WTC11 (cell line): ENCODE measurements at regions of chr15 and their contacts with region 1.

Region 1: DNA sequence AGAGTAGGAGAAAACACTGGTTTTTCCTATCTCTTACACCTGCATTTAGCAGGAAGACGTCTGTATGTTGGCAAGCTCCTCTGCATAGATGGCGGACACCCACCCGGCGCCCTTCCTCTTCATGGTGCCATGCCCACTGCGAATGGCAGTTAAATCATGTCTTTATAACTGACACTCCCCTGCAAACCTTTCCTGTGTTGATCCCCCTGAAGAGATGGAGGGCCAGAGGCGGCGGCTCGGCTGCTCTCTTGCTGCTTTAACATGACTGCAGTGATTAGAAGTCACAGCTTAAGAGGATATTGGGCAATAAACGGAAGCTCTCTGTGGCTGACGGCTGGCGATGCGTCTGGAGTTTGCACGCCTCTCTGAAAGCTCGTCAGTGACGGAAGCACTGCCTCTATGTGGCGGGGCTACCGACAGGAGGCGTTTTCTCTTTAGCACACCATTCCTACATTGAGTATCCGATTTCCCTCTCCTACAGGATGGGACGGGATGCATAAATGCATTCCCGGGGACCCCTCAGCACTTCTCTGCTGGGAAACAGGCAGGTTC is 25.5 kb upstream of the SNRPA1 start:
- DNase-seq: peak; percentile 64
- ATAC-seq: peak; percentile 90
- H3K4me3 Mint-ChIP-seq: peak overlapping the region; percentile 47; the same call in 1 of the 2 replicates
- H3K27ac Mint-ChIP-seq: no peak overlapping the region
- H3K4me1 Mint-ChIP-seq: peaks cover 6% of the 10 kb centered on the region
- H3K27me3 Mint-ChIP-seq: 0 out of 2 replicates have a peak, but pooled peaks cover 2% of the 10 kb centered on the region
- CTCF ChIP-seq: peak; percentile 42; the same call in 1 of the 2 replicates

Region 2: DNA sequence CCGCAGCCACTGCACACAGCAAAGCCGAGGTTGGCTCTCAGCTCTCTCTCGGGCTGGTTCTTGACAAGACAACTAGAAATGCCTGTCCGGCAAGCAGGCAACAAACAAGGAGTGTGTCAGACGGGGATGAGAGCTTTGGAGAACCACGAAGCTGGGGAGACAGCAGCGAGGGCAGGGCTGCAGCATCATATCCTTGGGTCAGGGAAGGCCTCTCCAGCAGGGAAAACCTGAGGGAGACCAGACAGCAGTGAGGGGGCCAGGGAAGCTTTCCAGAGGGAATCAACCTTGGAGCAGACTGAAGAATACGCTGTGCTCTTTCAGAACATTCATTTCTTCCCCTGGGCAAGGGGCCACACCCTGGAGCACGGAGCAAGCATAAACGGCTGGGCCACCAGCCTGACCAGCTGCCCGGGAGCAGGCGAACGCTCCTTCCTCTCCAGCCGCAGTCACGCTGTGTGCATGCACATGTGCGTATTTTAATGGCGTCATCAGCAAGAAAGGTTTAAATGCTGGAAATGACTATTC is 127.4 kb before region 1 on chr15:
- CTCF ChIA-PET with region 1: no interaction called
- POLR2A ChIA-PET with region 1: no interaction called
- DNase-seq: no peak
- ATAC-seq: peak; percentile 18
- H3K4me3 Mint-ChIP-seq: no peak overlapping the region
- H3K27ac Mint-ChIP-seq: peak overlapping the region; percentile 75
- H3K4me1 Mint-ChIP-seq: peaks cover 74% of the 10 kb centered on the region
- H3K27me3 Mint-ChIP-seq: no peaks in the 10 kb centered on the region
- CTCF ChIP-seq: no peak

Region 3: GRCh38 chr15:101232677-101233076 is 87.9 kb before region 1 on chr15:
- CTCF ChIA-PET with region 1: no interaction called
- POLR2A ChIA-PET with region 1: no interaction called
- DNase-seq: no peak
- ATAC-seq: peak; percentile 85
- H3K4me3 Mint-ChIP-seq: no peak overlapping the region
- H3K27ac Mint-ChIP-seq: no peak overlapping the region
- H3K4me1 Mint-ChIP-seq: peaks cover 35% of the 10 kb centered on the region
- H3K27me3 Mint-ChIP-seq: no peaks in the 10 kb centered on the region
- CTCF ChIP-seq: no peak

Region 4: DNA sequence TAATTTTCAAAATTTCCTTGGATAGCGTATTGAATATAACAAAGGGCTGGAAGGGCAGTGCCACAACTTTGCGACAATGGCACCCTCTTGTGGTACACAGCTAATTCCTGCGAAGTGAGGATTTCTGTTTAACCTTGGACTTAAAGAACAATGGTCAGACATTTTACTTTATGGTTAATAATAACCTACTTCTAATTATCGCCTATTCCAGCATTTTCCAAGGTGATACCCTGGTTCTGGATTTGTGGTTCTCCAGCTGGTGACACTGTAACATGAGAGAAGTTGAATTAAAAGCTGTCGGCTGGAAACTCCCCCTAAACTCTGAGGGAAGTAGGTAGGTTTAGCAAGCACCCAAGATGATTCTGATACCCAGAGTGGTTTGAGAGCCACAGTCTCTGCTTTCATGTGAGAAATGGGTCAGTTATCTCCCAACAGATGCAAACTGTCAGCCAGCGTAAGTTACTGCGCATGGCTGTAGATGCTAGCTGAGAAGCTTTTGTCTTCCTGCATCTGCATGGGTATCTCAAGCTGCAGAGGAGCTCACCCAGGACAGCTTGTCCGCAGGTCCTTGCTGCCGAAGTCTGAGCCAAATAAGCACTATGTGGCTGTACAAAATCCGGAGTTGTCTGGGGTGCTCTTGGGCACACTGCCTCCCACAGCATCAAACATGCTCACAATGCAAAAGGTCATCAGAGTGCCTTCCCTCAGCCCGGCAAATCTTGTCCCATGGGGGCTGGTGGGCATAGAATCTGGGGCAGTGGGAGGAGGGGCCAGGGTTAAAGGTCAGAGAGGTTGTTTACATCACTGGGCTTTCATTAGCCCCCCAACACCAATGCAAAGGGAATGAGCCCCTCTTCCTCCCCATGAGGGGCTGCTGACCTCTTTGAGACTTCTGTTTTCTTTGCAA is 62.1 kb before region 1 on chr15:
- CTCF ChIA-PET with region 1: no interaction called
- POLR2A ChIA-PET with region 1: no interaction called
- DNase-seq: peak; percentile 45
- ATAC-seq: peak; percentile 62
- H3K4me3 Mint-ChIP-seq: no peak overlapping the region
- H3K27ac Mint-ChIP-seq: no peak overlapping the region
- H3K4me1 Mint-ChIP-seq: peaks cover 38% of the 10 kb centered on the region
- H3K27me3 Mint-ChIP-seq: no peaks in the 10 kb centered on the region
- CTCF ChIP-seq: peak; percentile 48

Region 5: DNA sequence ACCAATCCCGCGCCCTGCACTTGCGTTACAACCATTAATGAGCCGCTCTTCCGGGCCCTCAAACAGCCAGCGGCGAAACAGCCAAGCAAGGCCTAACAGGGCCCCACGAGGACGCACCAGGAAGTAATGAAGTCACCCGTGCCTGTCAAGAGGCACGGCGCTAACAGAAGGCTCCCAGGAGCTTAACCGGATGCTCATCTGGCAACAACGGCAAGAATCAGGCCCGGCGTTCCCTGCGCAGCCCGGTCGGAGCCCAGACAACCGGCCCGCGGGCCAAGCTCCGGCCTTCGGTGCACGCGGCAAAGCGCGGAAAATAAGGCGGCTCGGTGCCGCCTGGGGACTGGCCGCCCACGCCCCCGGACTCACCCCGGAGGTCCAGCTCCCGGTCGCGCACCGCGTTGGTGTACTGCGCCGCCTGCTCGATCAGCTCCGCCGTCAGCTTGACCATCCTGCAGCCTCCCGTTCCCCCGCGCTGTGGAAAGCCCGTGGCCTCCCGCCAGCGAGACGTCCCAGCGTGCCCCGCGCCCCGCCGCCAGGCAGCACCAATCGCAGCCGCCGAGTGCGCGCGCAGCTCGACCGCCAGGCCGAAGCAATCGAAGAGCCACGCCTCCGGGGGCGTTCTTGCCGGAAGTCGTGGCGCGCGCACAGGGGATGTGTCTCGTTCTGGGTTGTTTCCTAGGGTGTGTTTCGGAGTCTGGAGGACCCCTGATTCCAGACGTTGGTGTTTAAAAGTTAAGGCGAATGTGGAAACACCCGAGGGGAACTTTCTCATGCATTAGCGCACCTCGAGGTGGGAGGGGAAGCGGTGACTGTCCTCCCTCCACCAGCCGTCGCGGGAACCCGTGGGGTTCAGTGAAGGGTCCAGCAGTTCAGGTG is 25.6 kb before region 1 on chr15 and contains the start of gene SNRPA1:
- CTCF ChIA-PET with region 1: interaction called, 11 read pairs
- POLR2A ChIA-PET with region 1: interaction called, 3 read pairs
- DNase-seq: peak; percentile 95
- ATAC-seq: peak; percentile 87
- H3K4me3 Mint-ChIP-seq: peak within 1 kb of the TSS; percentile 96
- H3K27ac Mint-ChIP-seq: peak within 1 kb of the TSS; percentile 74
- H3K4me1 Mint-ChIP-seq: peaks cover 17% of the 10 kb centered on the region
- H3K27me3 Mint-ChIP-seq: no peaks in the 10 kb centered on the region; the same call in 1 of the 2 replicates
- CTCF ChIP-seq: no peak
- total RNA-seq, gene SNRPA1: 144 to 170 TPM (median 151 TPM) in 3 replicates

Region 6: DNA sequence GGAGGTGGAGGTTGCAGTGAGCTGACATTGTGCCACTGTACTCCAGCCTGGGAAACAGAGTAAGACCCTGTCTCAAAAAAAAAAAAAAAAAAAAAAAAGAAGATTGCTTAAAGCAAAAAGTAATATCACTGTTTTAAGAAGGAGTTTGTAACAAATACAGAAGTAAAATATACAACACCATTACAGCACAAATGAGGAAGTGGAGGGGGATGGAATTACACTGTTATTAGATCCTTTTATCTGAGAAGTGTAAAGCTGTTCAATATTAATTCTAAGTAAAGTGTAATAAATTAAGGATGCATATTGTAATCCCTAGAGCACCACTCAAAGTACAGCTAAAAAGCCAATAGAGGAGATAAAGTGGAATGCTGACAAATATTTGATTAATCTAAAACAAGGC is 21.5 kb after region 1 on chr15:
- CTCF ChIA-PET with region 1: no interaction called
- POLR2A ChIA-PET with region 1: no interaction called
- DNase-seq: no peak
- ATAC-seq: no peak
- H3K4me3 Mint-ChIP-seq: no peak overlapping the region
- H3K27ac Mint-ChIP-seq: no peak overlapping the region
- H3K4me1 Mint-ChIP-seq: no peaks in the 10 kb centered on the region
- H3K27me3 Mint-ChIP-seq: peaks cover 13% of the 10 kb centered on the region
- CTCF ChIP-seq: no peak

Region 7: GRCh38 chr15:101396484-101397261 is 76.1 kb after region 1 on chr15:
- CTCF ChIA-PET with region 1: interaction called, 10 read pairs
- POLR2A ChIA-PET with region 1: no interaction called
- DNase-seq: no peak
- ATAC-seq: peak; percentile 34; the same call in 1 of the 2 replicates
- H3K4me3 Mint-ChIP-seq: no peak overlapping the region
- H3K27ac Mint-ChIP-seq: no peak overlapping the region
- H3K4me1 Mint-ChIP-seq: peaks cover 15% of the 10 kb centered on the region
- H3K27me3 Mint-ChIP-seq: no peaks in the 10 kb centered on the region; the same call in 1 of the 2 replicates
- CTCF ChIP-seq: no peak

Region 8: GRCh38 chr15:101641166-101641764 is 320.7 kb after region 1 on chr15:
- CTCF ChIA-PET with region 1: interaction called, 14 read pairs
- POLR2A ChIA-PET with region 1: no interaction called
- DNase-seq: peak; percentile 76
- ATAC-seq: peak; percentile 42
- H3K4me3 Mint-ChIP-seq: no peak overlapping the region
- H3K27ac Mint-ChIP-seq: peak overlapping the region; percentile 74; the same call in 1 of the 2 replicates
- H3K4me1 Mint-ChIP-seq: peaks cover 23% of the 10 kb centered on the region
- H3K27me3 Mint-ChIP-seq: no peaks in the 10 kb centered on the region
- CTCF ChIP-seq: peak; percentile 92